ENCODE measurements at regions of chr3 and their contacts with region 1.

Region 1: DNA sequence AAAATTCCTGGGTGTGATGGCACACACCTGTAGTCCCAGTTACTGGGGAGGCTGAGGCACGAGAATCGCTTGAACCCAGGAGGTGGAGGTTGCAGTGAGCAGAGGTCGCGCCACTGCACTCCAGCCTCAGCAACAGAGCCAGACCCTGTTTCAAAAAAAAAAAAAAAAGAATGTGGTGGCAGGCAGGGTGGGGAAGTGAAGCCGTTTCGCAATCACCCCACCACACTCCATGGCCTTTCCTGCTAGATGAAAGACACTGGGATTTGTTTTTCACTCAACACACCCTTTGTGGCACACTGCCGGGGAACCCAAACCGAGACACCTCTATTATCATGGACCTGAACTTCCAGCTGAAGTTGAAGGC is 172.4 kb upstream of the IQSEC1 start:
- DNase-seq: no peak
- H3K4me3 ChIP-seq: no peak overlapping the region
- H3K27ac ChIP-seq: no peak overlapping the region
- H3K4me1 ChIP-seq: peaks cover 10% of the 10 kb centered on the region
- H3K27me3 ChIP-seq: no peaks in the 10 kb centered on the region
- CTCF ChIP-seq: no peak

Region 2: DNA sequence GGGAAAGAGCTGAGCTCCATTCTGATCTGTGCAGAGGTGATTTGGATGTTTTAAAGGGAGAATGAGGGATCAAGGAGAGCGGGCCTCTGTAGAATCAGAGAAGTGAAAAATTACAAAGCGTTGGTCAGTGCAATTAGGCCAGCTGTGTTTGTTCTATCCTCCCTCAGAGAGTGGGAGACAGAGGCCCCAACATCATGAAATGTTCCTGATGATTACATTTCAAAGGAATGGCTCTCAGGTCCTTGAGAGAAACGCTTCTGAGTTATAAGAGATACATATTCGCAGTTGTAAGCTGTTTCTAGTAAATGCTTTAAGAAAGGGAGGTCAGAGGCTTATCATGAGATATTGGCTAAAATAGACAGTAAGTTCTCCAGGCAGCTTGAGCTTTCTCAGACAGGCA is 464.8 kb before region 1 on chr3:
- CTCF ChIA-PET with region 1: no interaction called
- dilution Hi-C with region 1: no loop called
- in situ Hi-C with region 1: no loop called
- intact Hi-C with region 1: no loop called
- DNase-seq: no peak
- H3K4me3 ChIP-seq: no peak overlapping the region
- H3K27ac ChIP-seq: no peak overlapping the region
- H3K4me1 ChIP-seq: no peaks in the 10 kb centered on the region
- H3K27me3 ChIP-seq: no peaks in the 10 kb centered on the region
- CTCF ChIP-seq: no peak

Region 3: GRCh38 chr3:13217736-13218540 is 27.7 kb before region 1 on chr3:
- CTCF ChIA-PET with region 1: no interaction called
- dilution Hi-C with region 1: no loop called
- in situ Hi-C with region 1: no loop called
- intact Hi-C with region 1: loop called (anchors 1 kb)
- DNase-seq: peak; percentile 87
- H3K4me3 ChIP-seq: no peak overlapping the region
- H3K27ac ChIP-seq: no peak overlapping the region
- H3K4me1 ChIP-seq: peaks cover 24% of the 10 kb centered on the region
- H3K27me3 ChIP-seq: no peaks in the 10 kb centered on the region
- CTCF ChIP-seq: no peak